Aorta (tissue), 5 donors: ENCODE measurements at regions of chr3 and their contacts with region 1.

Region 1: DNA sequence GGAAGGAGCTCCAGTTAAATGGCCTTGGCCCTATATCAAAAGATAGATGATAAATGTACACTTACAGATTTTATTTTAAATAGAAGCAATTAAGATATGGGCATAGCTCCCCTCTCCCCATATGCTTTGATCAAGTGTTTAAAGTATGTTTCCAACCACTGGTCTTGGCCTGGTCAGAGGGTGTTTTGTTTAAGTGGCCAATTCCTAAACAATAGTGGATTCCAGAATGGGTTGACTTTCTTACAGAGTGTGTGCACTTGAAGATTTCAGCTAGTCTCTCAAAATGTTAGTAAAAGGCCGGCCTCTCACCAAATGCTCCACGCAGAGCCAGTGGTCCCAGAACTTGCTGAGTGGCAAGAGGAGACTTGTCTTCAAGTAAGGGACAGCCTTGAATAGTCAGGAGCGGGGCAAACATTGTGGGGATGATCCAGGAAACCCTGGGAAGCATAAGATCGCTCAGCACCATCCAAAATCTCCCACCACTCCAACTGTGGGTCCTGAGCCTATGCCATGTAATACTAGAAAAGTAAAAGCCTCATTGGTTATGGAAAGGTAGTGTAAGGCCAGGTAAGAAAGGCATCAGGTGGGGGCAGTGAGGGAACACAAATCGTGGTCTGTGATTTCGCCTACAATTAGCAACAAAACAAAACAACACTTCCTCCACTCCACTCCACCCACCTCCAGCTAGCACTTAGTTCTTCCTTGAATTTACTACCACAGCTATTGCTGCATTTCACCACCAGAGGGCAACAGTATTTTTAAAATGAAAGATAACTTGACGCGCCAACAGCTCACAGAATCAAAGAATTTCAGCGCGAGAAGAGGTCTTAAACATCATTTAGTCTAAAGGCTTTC is 4.8 kb downstream of the RARRES1 start:
- DNase-seq: no peak
- ATAC-seq: peak; percentile 63
- H3K4me3 ChIP-seq: no peak overlapping the region
- H3K27ac ChIP-seq: peak overlapping the region in 1 of 2 donors; percentile 22
- H3K4me1 ChIP-seq: peaks cover 6% of the 10 kb centered on the region in 2 donors
- H3K27me3 ChIP-seq: no peaks in the 10 kb centered on the region

Region 2: GRCh38 chr3:158659454-158660237 is 67.8 kb before region 1 on chr3:
- intact Hi-C with region 1: loop called in 1 of 2 experiments (anchors 5 kb)
- DNase-seq: no peak
- ATAC-seq: peak; percentile 81
- H3K4me3 ChIP-seq: no peak overlapping the region
- H3K27ac ChIP-seq: no peak overlapping the region
- H3K4me1 ChIP-seq: no peaks in the 10 kb centered on the region
- H3K27me3 ChIP-seq: no peaks in the 10 kb centered on the region

Region 3: GRCh38 chr3:158768361-158768787 is 40.9 kb after region 1 on chr3:
- intact Hi-C with region 1: loop called in 1 of 2 experiments (anchors 5 kb)
- DNase-seq: peak; percentile 76 to 90
- ATAC-seq: peak; percentile 74
- H3K4me3 ChIP-seq: no peak overlapping the region
- H3K27ac ChIP-seq: no peak overlapping the region
- H3K4me1 ChIP-seq: no peaks in the 10 kb centered on the region
- H3K27me3 ChIP-seq: no peaks in the 10 kb centered on the region

Region 4: DNA sequence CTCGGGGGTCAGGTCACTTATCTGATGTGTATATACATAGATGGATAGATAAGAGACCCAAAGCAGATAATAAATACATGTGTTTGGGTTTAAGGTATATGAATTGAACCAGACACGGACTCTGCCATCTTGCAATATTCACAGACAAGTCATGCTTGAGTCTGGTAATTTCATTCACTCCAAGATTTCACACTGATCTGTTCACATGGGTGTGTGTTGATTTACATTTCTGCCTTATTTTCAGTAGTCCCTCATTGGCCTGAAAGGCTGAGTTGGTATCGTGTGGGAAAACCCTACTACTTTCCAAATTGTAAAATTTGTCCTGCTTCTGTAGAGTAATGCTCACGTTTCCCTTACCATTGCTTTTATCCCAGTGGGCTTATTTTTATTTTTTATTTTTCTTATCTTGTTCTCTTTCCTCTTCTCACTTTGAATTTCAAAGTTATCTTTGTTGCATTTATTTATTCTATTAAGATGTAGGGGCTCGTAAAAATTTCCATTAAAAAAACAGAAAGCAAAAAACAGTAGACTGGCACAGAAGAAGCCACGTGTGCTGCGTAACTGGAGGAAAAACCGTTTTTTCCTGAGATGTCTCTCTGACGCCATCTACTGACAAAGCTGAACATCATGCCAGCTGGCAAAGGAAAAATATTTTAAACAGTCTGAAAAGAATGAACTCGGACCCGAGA is 63.6 kb after region 1 on chr3:
- intact Hi-C with region 1: loop called (anchors 2 kb)
- DNase-seq: no peak
- ATAC-seq: peak; percentile 83
- H3K4me3 ChIP-seq: peak overlapping the region in 1 of 2 donors; percentile 34
- H3K27ac ChIP-seq: no peak overlapping the region
- H3K4me1 ChIP-seq: no peaks in the 10 kb centered on the region
- H3K27me3 ChIP-seq: no peaks in the 10 kb centered on the region

Region 5: DNA sequence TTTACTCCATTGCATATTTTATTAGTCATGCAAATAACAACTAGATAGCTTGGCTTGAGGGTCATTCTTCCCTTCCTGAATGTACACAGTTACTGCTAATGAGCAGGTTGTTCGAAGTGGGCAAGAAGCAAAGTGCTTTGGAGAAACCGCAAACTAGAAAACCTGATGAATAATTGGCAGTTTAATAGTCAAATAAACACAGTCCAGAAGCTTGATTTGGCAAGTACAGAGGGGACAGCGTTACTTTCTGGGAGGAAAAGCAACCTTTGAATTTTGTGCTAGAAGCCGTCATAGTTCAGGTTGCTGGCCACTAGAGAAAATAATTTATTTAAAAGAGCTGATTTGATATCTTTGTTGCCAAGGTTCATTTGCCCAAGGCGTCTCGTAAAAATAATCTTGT is 169.3 kb after region 1 on chr3:
- intact Hi-C with region 1: no loop called
- DNase-seq: no peak
- ATAC-seq: no peak
- H3K4me3 ChIP-seq: no peak overlapping the region
- H3K27ac ChIP-seq: no peak overlapping the region
- H3K4me1 ChIP-seq: no peaks in the 10 kb centered on the region
- H3K27me3 ChIP-seq: no peaks in the 10 kb centered on the region